PC-9 (cell line): ENCODE measurements at regions of chr1 and their contacts with region 1.

Region 1: GRCh38 chr1:16120901-16121410 is 34.9 kb downstream of the EPHA2 start:
- DNase-seq: peak in 1 of 2 experiments; percentile 87
- H3K4me3 ChIP-seq: no peak overlapping the region
- H3K27ac ChIP-seq: peak overlapping the region; percentile 61
- H3K4me1 ChIP-seq: peaks cover 55% of the 10 kb centered on the region
- H3K27me3 ChIP-seq: no peaks in the 10 kb centered on the region
- CTCF ChIP-seq: no peak

Region 2: GRCh38 chr1:16088996-16089395 is 32.0 kb before region 1 on chr1:
- CTCF ChIA-PET with region 1: no interaction called
- POLR2A ChIA-PET with region 1: no interaction called
- intact Hi-C with region 1: loop called (anchors 2 kb)
- DNase-seq: peak; percentile 87 to 97
- H3K4me3 ChIP-seq: peak overlapping the region; percentile 45; the same call in 1 of the 2 replicates
- H3K27ac ChIP-seq: peak overlapping the region; percentile 95
- H3K4me1 ChIP-seq: peaks cover 83% of the 10 kb centered on the region
- H3K27me3 ChIP-seq: no peaks in the 10 kb centered on the region
- CTCF ChIP-seq: no peak

Region 3: GRCh38 chr1:16139473-16139962 is 18.6 kb after region 1 on chr1:
- CTCF ChIA-PET with region 1: no interaction called
- POLR2A ChIA-PET with region 1: interaction called, 12 read pairs
- intact Hi-C with region 1: no loop called
- DNase-seq: peak; percentile 47 to 89
- H3K4me3 ChIP-seq: peak overlapping the region; percentile 33; the same call in 1 of the 2 replicates
- H3K27ac ChIP-seq: peak overlapping the region; percentile 92
- H3K4me1 ChIP-seq: peaks cover 72% of the 10 kb centered on the region
- H3K27me3 ChIP-seq: no peaks in the 10 kb centered on the region
- CTCF ChIP-seq: no peak; the same call in 1 of the 2 replicates

Region 4: DNA sequence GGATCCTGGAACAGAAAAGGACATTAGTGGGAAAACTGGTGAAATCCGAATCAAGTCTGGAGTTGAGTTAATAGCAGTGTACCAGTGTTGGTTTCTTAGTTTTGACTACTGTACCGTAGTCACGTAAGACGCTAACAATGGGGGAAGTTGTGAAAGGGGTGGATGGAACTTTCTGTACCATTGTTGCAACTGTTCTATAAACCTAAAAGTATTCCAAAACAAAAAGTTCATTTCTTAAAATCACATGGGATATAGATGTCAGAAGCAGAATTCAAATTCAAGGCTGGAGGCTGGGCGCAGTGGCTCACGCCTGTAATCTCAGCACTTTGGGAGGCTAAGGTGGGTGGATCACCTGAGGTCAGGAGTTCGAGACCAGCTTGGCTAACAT is 74.6 kb after region 1 on chr1:
- CTCF ChIA-PET with region 1: no interaction called
- POLR2A ChIA-PET with region 1: no interaction called
- intact Hi-C with region 1: no loop called
- DNase-seq: no peak
- H3K4me3 ChIP-seq: no peak overlapping the region
- H3K27ac ChIP-seq: no peak overlapping the region
- H3K4me1 ChIP-seq: peaks cover under 1% of the 10 kb centered on the region; the same call in 1 of the 2 replicates
- H3K27me3 ChIP-seq: no peaks in the 10 kb centered on the region
- CTCF ChIP-seq: no peak

Region 5: DNA sequence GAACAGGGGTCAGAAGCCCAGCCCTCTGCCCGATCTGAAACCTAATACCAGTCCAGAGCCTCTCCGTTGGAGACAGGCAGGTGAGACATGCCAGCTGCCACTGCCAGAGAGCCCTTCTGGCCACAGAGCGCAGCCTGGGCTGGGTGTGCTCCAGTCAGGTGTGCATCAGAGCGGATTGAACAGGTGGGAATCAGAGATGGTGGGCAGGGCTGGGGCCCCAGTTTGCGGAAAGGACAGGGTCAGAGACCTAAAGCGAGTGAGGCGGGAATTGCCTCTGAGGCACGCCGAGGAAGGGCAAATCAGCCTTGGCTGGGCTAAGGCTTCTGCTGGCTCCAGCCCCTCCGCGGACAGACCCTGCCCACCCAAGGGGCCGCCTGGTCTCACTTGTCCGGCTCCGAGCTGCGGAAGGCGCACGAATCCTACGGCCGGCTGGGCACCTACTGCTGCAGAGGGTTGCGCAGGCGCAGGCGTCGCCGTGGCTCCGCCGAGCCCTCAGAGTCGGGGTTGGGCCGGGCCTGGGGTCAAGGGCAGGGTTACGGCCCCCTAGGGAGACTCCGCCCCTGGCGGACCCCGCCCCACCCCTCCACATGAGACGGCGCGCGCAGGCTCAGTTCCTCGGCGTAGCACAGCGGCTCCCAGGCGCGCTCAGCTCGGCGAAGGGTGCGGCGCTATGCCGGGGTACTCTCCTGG is 105.7 kb after region 1 on chr1:
- CTCF ChIA-PET with region 1: no interaction called
- POLR2A ChIA-PET with region 1: no interaction called
- intact Hi-C with region 1: no loop called
- DNase-seq: no peak
- H3K4me3 ChIP-seq: no peak overlapping the region
- H3K27ac ChIP-seq: no peak overlapping the region
- H3K4me1 ChIP-seq: no peaks in the 10 kb centered on the region
- H3K27me3 ChIP-seq: no peaks in the 10 kb centered on the region
- CTCF ChIP-seq: no peak

Region 6: GRCh38 chr1:16321176-16321867 is 200.4 kb after region 1 on chr1:
- CTCF ChIA-PET with region 1: interaction called, 19 read pairs
- POLR2A ChIA-PET with region 1: no interaction called
- intact Hi-C with region 1: no loop called
- DNase-seq: no peak
- H3K4me3 ChIP-seq: no peak overlapping the region
- H3K27ac ChIP-seq: no peak overlapping the region
- H3K4me1 ChIP-seq: peaks cover 9% of the 10 kb centered on the region
- H3K27me3 ChIP-seq: no peaks in the 10 kb centered on the region
- CTCF ChIP-seq: no peak